ENCODE measurements at regions of chr11 and their contacts with region 1.

Region 1: DNA sequence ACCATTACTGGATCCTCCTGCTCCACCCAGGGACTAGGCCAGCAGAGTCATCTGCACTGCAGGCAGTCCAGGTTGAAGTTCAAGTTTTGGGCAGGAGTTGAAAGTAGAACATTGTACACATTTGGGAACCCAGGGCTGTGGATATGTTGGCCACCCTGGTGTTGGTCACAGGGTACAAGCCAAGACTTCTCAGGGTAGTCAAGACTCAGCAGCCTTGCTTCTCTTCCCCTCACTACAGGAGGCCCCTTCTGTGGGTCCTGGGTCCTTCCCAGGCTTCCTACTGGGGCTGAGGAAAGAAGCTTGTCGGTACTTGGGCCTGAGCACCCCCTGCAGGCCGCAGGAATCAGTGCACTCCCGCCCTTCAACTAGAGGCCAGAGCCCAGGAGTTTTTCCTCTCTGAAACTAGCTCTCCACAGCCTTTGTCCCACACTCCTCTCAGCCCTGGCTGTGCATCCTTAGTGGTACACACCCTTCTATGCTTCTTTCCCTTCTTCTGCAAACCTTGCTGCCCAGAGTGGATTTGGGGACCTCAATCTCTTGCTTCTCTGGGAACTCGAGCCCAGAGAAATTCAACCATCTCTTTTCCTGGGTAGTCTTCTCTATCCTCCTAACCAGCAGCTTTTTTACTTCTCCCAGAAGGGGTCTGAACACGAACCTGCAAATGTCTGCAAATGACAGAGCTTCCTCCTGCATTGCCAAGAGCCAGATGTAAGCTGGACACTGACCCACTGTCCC is 2.6 kb upstream of the HPX start:
- DNase-seq: peak; percentile 48 to 51
- H3K4me3 ChIP-seq: no peak overlapping the region
- H3K27ac ChIP-seq: no peak overlapping the region
- H3K4me1 ChIP-seq: no peaks in the 10 kb centered on the region
- H3K27me3 ChIP-seq: no peaks in the 10 kb centered on the region
- CTCF ChIP-seq: peak; percentile 15 to 84 (median 68)
- POLR2A ChIP-seq: no peak

Region 2: DNA sequence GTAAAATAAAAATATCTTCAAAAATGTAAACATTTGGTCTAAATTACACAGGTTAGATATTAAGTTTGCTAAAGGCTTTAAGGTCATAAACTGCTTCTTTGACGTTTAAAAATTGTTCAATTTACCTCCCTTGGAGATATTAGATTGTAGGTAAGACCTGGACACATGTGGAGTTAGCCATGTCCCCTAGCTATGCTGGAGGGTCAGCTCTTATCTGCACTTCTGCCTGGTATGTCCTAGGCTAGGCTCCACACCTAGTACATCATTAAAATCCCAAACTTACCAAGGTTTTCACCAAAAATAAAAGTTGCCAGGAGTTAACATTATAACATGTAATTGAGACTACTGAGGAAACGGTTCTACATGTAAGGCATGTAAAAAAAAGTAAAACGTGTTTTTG is 157.9 kb before region 1 on chr11:
- intact Hi-C with region 1: no loop called
- DNase-seq: no peak
- H3K4me3 ChIP-seq: no peak overlapping the region
- H3K27ac ChIP-seq: no peak overlapping the region
- H3K4me1 ChIP-seq: no peaks in the 10 kb centered on the region
- H3K27me3 ChIP-seq: no peaks in the 10 kb centered on the region
- CTCF ChIP-seq: no peak
- POLR2A ChIP-seq: no peak

Region 3: GRCh38 chr11:6377902-6378639 is 65.4 kb before region 1 on chr11:
- intact Hi-C with region 1: loop called (anchors 2 kb)
- DNase-seq: no peak
- H3K4me3 ChIP-seq: no peak overlapping the region
- H3K27ac ChIP-seq: no peak overlapping the region
- H3K4me1 ChIP-seq: no peaks in the 10 kb centered on the region
- H3K27me3 ChIP-seq: no peaks in the 10 kb centered on the region
- CTCF ChIP-seq: no peak
- POLR2A ChIP-seq: no peak

Measured in thyroid gland (tissue), 4 donors.